MCF 10A (cell line): ENCODE measurements at regions of chr13 and their contacts with region 1.

Region 1: DNA sequence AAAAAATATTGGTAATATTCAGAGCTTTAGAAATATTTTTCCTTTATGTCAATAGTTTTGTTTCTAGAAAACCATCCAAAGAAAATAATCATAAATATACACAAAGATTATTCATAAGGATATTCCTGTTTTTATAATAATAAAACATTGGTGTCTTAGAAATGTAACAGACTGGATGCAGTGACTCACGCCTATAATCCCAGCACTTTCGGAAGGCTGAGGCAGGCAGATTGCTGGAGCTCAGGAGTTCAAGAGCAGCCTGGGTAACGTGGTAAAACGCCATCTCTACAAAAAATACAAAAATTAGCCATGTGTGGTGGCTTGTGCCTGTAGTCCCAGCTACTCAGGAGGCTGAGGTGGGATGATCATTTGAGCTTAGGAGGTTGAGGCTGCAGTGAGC is 106.8 kb downstream of the DHRS12 start:
- DNase-seq: peak; percentile 51
- H3K4me3 Mint-ChIP-seq: no peak overlapping the region
- H3K27ac Mint-ChIP-seq: peak overlapping the region; percentile 69
- H3K4me1 Mint-ChIP-seq: peaks cover 18% of the 10 kb centered on the region
- H3K27me3 Mint-ChIP-seq: no peaks in the 10 kb centered on the region
- CTCF ChIP-seq: no peak

Region 2: DNA sequence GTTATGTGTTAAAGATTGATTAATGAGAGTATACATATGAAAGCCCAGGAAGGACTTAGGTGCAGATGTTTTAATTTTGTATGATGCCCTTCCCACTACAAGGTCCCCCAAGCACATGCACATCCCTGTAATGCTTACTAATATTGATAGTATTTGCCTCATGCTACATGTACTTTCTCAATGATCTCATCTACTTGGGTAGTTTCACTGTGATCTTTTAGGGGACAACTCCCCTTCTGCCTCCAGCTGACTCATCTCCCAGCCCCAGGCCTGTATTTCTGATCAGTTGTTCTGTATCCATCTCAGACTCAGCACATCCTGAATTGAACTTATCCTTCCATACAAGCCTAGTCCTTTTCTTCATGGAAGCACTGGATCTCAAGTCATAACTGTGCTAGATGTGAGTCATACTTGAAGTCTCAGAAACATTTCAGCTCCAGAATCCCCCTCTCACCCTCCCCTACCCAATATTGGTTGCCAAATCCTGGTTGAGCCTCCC is 195.0 kb before region 1 on chr13:
- CTCF ChIA-PET with region 1: no interaction called
- POLR2A ChIA-PET with region 1: no interaction called
- intact Hi-C with region 1: no loop called
- DNase-seq: no peak
- H3K4me3 Mint-ChIP-seq: no peak overlapping the region
- H3K27ac Mint-ChIP-seq: peak overlapping the region; percentile 2
- H3K4me1 Mint-ChIP-seq: peaks cover 18% of the 10 kb centered on the region
- H3K27me3 Mint-ChIP-seq: no peaks in the 10 kb centered on the region
- CTCF ChIP-seq: no peak

Region 3: GRCh38 chr13:51663973-51664957 is 32.9 kb before region 1 on chr13:
- CTCF ChIA-PET with region 1: no interaction called
- POLR2A ChIA-PET with region 1: no interaction called
- intact Hi-C with region 1: no loop called
- DNase-seq: no peak
- H3K4me3 Mint-ChIP-seq: no peak overlapping the region
- H3K27ac Mint-ChIP-seq: no peak overlapping the region
- H3K4me1 Mint-ChIP-seq: peaks cover 35% of the 10 kb centered on the region
- H3K27me3 Mint-ChIP-seq: no peaks in the 10 kb centered on the region
- CTCF ChIP-seq: no peak

Region 4: GRCh38 chr13:51681037-51681678 is 16.0 kb before region 1 on chr13:
- CTCF ChIA-PET with region 1: interaction called, 6 read pairs
- POLR2A ChIA-PET with region 1: interaction called, 27 read pairs
- intact Hi-C with region 1: no loop called
- DNase-seq: peak; percentile 78
- H3K4me3 Mint-ChIP-seq: no peak overlapping the region
- H3K27ac Mint-ChIP-seq: peak overlapping the region; percentile 40
- H3K4me1 Mint-ChIP-seq: peaks cover 30% of the 10 kb centered on the region
- H3K27me3 Mint-ChIP-seq: no peaks in the 10 kb centered on the region
- CTCF ChIP-seq: no peak

Region 5: GRCh38 chr13:51844862-51845573 is 147.8 kb after region 1 on chr13 and contains the start of gene TMEM272:
- CTCF ChIA-PET with region 1: no interaction called
- POLR2A ChIA-PET with region 1: no interaction called
- intact Hi-C with region 1: no loop called
- DNase-seq: peak; percentile 52
- H3K4me3 Mint-ChIP-seq: peak within 1 kb of the TSS; percentile 7
- H3K27ac Mint-ChIP-seq: no peak within 1 kb of the TSS
- H3K4me1 Mint-ChIP-seq: peaks cover 19% of the 10 kb centered on the region
- H3K27me3 Mint-ChIP-seq: peaks cover 42% of the 10 kb centered on the region
- CTCF ChIP-seq: peak; percentile 73
- total RNA-seq, gene TMEM272: not detected in 2 replicates